Tibial artery (tissue), 4 donors: ENCODE measurements at regions of chr6 and their contacts with region 1.

Region 1: DNA sequence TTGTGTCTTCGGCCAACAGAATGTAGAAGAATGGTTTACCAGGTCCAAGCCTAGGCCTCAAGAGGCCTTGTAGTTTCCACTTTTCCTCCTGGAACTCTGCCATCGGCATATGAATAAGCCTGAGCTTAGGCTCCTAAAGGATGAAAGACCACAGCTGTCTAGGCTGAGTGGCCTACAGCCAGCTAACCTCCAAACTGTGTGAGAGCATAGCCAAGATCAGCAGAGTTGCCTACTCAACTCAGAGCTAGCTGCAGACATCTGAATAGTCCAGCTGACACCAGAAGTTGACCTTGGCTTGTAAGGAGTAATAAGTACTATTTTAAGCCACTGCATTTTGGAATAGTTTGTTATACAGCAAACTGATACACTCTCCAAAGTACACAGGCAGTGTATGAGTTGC is 52.6 kb upstream of the SMIM29 start:
- DNase-seq: peak; percentile 49 to 86
- H3K4me3 ChIP-seq: no peak overlapping the region
- H3K27ac ChIP-seq: peak overlapping the region in 1 of 2 donors; percentile 55
- H3K4me1 ChIP-seq: peaks cover 0 to 93% (median 39%) of the 10 kb centered on the region in 4 donors
- H3K27me3 ChIP-seq: no peaks in the 10 kb centered on the region
- CTCF ChIP-seq: no peak

Region 2: DNA sequence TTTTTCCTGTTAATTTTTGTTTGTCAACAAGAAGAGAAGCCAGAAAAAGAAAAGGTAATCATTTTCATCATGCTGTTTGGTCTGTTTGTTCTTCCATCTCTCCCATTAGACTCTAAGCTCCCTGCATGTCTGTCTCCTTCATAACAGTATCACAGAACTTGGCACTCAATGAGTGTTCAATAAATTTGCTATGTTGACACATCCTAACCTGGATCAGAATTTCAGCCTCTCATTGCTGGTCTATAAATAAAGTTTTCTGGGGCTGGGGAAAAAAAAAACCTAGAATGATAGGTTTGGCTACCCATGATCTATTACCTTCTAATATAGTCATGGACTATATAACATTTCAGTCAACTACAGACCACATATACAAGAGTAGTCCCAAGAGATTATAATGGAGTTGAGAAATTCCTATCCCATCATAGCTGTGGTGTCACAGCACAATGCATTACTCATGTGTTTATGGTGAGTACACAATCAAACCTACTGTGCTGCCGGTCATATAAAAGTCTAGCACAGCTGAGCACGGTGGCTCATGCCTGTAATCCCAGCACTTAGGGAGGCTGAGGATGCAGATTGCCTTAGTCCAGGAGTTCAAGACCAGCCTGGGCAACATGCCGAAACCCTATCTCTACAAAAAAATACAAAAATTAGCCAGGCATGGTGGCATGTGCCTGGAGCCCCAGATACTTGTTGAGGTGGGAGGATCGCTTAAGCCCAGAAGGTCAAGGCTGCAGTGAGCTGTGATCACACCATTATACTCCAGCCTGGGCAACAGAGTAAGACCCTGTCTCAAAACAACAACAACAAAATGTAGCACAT is 85.1 kb after region 1 on chr6:
- intact Hi-C with region 1: loop called (anchors 5 kb)
- DNase-seq: no peak
- H3K4me3 ChIP-seq: no peak overlapping the region
- H3K27ac ChIP-seq: no peak overlapping the region
- H3K4me1 ChIP-seq: peaks cover 0 to 77% (median 19%) of the 10 kb centered on the region in 4 donors
- H3K27me3 ChIP-seq: no peaks in the 10 kb centered on the region
- CTCF ChIP-seq: no peak